ENCODE measurements at regions of chr21 and their contacts with region 1.

Region 1: GRCh38 chr21:26715878-26716506 is 129.2 kb downstream of the ADAMTS1 start:
- DNase-seq: peak; percentile 29
- ATAC-seq: no peak
- H3K4me3 ChIP-seq: no peak overlapping the region
- H3K4me3 Mint-ChIP-seq: no peak overlapping the region
- H3K27ac ChIP-seq: no peak overlapping the region
- H3K27ac Mint-ChIP-seq: no peak overlapping the region
- H3K4me1 ChIP-seq: no peaks in the 10 kb centered on the region
- H3K4me1 Mint-ChIP-seq: no peaks in the 10 kb centered on the region
- H3K27me3 ChIP-seq: no peaks in the 10 kb centered on the region
- H3K27me3 Mint-ChIP-seq: peaks cover 12% of the 10 kb centered on the region
- CTCF ChIP-seq: peak; percentile 68

Region 2: DNA sequence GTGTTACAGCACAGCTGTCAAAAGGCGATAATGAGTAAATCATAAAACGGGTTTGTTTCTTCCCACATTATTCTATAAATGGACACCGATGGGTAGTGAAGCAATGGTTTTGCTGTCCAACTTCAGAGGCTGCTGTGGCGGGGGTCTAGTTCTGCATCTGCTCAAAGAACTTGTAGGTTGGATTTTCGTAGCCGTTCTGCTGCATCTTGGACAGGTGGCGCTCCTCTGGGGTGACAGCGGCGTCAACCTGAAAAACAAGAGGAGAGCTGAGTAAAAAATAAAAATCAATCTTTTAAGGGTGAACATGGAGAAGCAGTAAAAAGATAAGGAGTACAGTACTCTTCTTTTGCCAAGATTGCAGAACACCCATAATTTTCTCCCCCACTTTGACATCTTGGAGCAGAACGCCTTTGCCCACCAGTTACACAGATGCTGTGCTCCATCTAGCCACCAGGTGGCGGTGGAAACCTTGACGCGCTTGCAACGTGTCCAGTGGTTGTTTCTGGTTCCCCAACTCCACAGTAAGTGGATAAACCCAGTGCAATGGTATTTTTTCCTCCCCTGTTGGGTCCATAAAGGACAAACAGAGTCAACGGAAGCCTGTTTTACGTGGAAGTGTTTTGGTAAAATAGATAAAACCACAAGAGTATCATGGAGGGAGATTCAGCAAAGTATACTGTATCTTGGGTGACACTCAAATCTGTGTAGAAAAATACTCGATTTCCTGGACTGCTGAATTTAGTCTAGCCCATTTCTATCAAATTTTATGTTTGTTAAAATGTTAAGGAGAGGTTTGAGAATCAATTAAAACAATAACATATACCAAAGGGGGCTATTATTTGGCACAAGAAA is 834.2 kb before region 1 on chr21:
- CTCF ChIA-PET with region 1: interaction called, 13 read pairs
- POLR2A ChIA-PET with region 1: no interaction called
- intact Hi-C with region 1: no loop called
- DNase-seq: peak; percentile 69
- ATAC-seq: peak; percentile 86
- H3K4me3 ChIP-seq: no peak overlapping the region
- H3K4me3 Mint-ChIP-seq: no peak overlapping the region
- H3K27ac ChIP-seq: no peak overlapping the region
- H3K27ac Mint-ChIP-seq: no peak overlapping the region
- H3K4me1 ChIP-seq: no peaks in the 10 kb centered on the region
- H3K4me1 Mint-ChIP-seq: no peaks in the 10 kb centered on the region
- H3K27me3 ChIP-seq: no peaks in the 10 kb centered on the region
- H3K27me3 Mint-ChIP-seq: no peaks in the 10 kb centered on the region
- CTCF ChIP-seq: peak; percentile 99

Region 3: GRCh38 chr21:26490771-26491170 is 225.2 kb before region 1 on chr21:
- CTCF ChIA-PET with region 1: no interaction called
- POLR2A ChIA-PET with region 1: no interaction called
- intact Hi-C with region 1: no loop called
- DNase-seq: no peak
- ATAC-seq: no peak
- H3K4me3 ChIP-seq: no peak overlapping the region
- H3K4me3 Mint-ChIP-seq: no peak overlapping the region
- H3K27ac ChIP-seq: no peak overlapping the region
- H3K27ac Mint-ChIP-seq: no peak overlapping the region
- H3K4me1 ChIP-seq: no peaks in the 10 kb centered on the region
- H3K4me1 Mint-ChIP-seq: no peaks in the 10 kb centered on the region
- H3K27me3 ChIP-seq: no peaks in the 10 kb centered on the region
- H3K27me3 Mint-ChIP-seq: no peaks in the 10 kb centered on the region
- CTCF ChIP-seq: no peak

Region 4: GRCh38 chr21:26659182-26659581 is 56.8 kb before region 1 on chr21:
- CTCF ChIA-PET with region 1: no interaction called
- POLR2A ChIA-PET with region 1: no interaction called
- intact Hi-C with region 1: loop called (anchors 10 kb)
- DNase-seq: no peak
- ATAC-seq: no peak
- H3K4me3 ChIP-seq: no peak overlapping the region
- H3K4me3 Mint-ChIP-seq: no peak overlapping the region
- H3K27ac ChIP-seq: no peak overlapping the region
- H3K27ac Mint-ChIP-seq: no peak overlapping the region
- H3K4me1 ChIP-seq: no peaks in the 10 kb centered on the region
- H3K4me1 Mint-ChIP-seq: no peaks in the 10 kb centered on the region
- H3K27me3 ChIP-seq: no peaks in the 10 kb centered on the region
- H3K27me3 Mint-ChIP-seq: peaks cover 3% of the 10 kb centered on the region
- CTCF ChIP-seq: no peak

Region 5: GRCh38 chr21:26732432-26733221 is 16.6 kb after region 1 on chr21:
- CTCF ChIA-PET with region 1: interaction called, 17 read pairs
- POLR2A ChIA-PET with region 1: no interaction called
- intact Hi-C with region 1: no loop called
- DNase-seq: peak; percentile 26
- ATAC-seq: no peak
- H3K4me3 ChIP-seq: no peak overlapping the region
- H3K4me3 Mint-ChIP-seq: no peak overlapping the region
- H3K27ac ChIP-seq: no peak overlapping the region
- H3K27ac Mint-ChIP-seq: no peak overlapping the region
- H3K4me1 ChIP-seq: no peaks in the 10 kb centered on the region
- H3K4me1 Mint-ChIP-seq: no peaks in the 10 kb centered on the region
- H3K27me3 ChIP-seq: peaks cover 0 to 3% (median 0%) of the 10 kb centered on the region in 4 experiments
- H3K27me3 Mint-ChIP-seq: peaks cover 8% of the 10 kb centered on the region
- CTCF ChIP-seq: peak; percentile 47